Right ventricle myocardium superior (tissue), 1 donor: ENCODE measurements at regions of chr5 and their contacts with region 1.

Region 1: DNA sequence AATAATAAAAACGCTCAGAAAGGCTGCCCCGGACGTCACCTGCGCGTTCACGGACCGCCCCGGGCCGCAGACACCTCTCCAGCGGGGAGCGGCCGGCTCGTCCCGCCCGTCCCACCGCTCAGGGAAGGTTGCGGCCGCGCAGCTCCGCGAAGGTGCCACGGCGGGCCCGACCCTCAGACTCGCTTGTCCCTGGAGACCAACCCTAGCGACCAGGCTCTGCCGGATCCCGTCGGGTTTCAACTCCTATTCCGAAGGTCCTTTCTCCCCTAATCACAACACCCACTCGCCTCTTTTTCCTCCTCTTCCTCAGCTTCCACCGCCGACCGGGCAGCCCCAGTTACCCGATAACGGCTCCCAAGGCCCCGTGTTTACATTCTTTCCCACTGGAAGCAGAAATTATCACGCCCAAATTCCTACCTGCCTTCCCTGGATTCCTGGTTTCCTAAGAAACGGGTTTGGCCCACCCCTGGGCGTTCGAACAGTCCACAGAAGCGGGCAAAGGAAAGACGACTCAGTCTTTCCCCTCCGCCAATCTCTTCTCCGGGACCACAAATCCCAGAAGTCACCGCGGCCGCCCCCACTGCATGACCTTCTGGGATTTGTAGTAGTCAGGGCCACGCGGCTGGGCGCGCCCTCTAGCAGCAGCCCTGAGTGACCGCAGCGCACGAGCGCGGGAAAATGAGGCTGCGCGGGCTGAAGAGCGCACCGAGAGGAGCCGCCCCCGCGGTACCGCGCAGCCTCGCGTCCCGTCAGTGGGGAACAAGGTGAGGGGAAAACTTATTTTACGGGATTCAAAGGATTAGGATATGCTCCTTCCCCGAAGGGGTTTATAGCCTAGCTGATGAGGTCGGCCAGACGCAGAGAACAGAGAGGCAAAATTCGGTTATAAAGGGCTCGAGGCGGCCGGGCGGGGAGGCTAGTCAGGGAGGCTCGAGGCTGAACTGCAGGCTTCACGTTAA is at the start of gene TTC33:
- DNase-seq: peak; percentile 98
- ATAC-seq: peak; percentile 99
- total RNA-seq, gene TTC33: 15.2 TPM

Region 2: GRCh38 chr5:40386289-40386688 is 369.4 kb before region 1 on chr5:
- intact Hi-C with region 1: no loop called
- DNase-seq: no peak
- ATAC-seq: no peak

Region 3: GRCh38 chr5:40634154-40634553 is 121.5 kb before region 1 on chr5:
- intact Hi-C with region 1: no loop called
- DNase-seq: no peak
- ATAC-seq: no peak

Region 4: GRCh38 chr5:40834849-40835787 is 79.4 kb after region 1 on chr5 and contains the start of gene RPL37:
- intact Hi-C with region 1: loop called (anchors 10 kb)
- DNase-seq: peak; percentile 97
- ATAC-seq: peak; percentile 100
- total RNA-seq, gene RPL37: 601 TPM

Region 5: DNA sequence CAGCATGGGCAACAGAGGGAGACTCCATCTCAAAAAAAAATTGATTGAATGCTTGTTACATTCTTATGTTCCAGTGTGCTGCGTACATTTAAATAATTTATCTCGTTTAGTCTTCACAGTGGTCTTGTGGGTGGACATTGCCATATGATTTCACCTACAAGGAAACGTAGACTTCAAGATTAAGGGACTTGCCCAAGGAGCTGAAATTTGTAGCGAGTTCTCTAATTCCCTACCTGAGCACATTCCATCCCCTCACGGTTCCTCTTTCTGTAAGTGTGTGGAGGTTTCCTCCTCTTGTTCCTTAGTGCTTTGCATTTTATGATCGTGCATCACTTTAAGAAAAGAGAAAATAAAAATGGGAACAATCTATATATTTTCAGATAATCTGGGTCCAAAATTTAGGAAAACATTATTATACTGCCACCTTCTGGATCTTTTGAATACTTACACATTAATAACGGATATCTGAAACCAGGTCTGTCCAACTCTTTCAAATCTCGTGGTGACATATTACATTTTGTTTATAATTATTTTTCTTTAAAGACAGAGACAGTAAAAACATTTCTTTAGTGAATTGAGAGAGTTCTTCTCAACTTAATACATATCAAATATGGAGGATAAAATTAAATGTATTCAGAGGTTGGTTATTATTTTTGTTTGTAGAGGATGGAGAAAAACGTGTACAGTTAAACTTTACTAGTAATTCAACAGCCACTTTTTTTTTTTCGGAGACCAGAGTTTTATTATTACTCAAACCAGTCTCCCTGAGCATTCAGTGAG is 123.7 kb after region 1 on chr5:
- intact Hi-C with region 1: loop called (anchors 10 kb)
- DNase-seq: no peak
- ATAC-seq: peak; percentile 57

Region 6: DNA sequence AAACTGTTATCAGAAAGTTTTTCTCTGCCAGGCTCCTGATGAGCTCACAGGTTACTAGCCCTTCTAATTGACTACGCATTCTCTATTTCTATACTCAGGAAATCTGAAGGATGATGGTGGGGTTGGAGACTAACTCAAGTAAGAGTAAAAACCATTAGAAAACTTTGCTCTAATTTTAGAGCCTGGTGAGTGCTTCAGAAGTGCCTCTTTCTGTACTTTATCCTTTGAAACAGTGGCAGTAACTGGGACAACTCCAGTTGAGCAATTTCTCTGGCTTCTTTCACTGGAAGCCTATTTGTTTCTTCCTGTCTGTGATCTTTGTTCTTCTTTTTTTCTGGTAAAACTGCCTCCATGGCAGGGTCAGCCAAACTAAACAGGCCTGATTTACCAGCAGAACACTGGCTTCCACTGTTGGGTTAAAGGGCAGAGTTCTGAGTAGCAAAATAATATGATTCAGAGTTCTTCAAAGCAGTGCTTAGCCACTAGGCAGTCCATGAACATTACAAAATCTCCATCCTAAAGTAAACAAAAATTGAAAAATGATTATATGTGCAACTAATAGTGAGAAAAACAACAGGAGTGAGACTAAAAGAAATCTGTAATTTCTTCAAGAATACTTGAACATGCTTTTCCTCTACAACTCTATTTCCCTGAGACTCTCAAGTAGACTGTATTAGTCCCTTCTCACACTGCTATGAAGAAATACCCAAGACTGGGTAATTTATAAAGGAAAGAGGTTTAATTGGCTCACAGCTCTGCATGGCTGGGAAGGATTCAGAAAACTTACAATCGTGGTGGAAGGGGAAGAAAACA is 235.7 kb after region 1 on chr5:
- intact Hi-C with region 1: no loop called
- DNase-seq: peak; percentile 49
- ATAC-seq: peak; percentile 86

Region 7: GRCh38 chr5:41656308-41656996 is 900.8 kb after region 1 on chr5:
- intact Hi-C with region 1: no loop called
- DNase-seq: no peak
- ATAC-seq: no peak